HCT116 (cell line): ENCODE measurements at regions of chrX and their contacts with region 1.

Region 1: GRCh38 chrX:134782796-134783195 is 124.5 kb upstream of the PLAC1 start:
- DNase-seq: no peak
- ATAC-seq: no peak
- H3K4me3 ChIP-seq: no peak overlapping the region
- H3K27ac ChIP-seq: no peak overlapping the region
- H3K4me1 ChIP-seq: no peaks in the 10 kb centered on the region
- H3K27me3 ChIP-seq: no peaks in the 10 kb centered on the region
- CTCF ChIP-seq: peak; percentile 30 to 49 (median 34); a peak in 4 of 6 replicates
- POLR2A ChIP-seq: no peak
- RAD21 ChIP-seq: peak; percentile 42

Region 2: DNA sequence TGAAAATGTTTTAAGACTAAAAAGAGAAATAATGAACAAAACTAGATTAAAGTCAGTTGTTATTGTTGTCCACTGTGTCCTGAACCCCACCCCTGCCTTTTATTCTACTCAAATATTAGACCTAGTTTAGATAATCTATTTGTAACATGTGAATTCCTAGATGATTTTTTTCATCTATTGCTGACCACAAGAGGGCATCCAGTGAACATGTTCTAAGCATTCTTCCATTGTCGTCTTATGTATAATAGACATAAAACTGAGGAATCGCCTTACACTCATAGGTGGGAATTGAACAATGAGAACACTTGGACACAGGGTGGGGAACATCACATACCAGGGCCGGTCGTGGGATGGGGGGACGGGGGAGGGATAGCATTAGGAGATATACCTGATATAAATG is 359.2 kb before region 1 on chrX:
- CTCF ChIA-PET with region 1: interaction called, 3 read pairs
- POLR2A ChIA-PET with region 1: no interaction called
- RAD21 ChIA-PET with region 1: no interaction called
- intact Hi-C with region 1: loop called (anchors 2 kb)
- DNase-seq: no peak
- ATAC-seq: peak; percentile 46
- H3K4me3 ChIP-seq: no peak overlapping the region
- H3K27ac ChIP-seq: no peak overlapping the region
- H3K4me1 ChIP-seq: no peaks in the 10 kb centered on the region
- H3K27me3 ChIP-seq: no peaks in the 10 kb centered on the region
- CTCF ChIP-seq: peak; percentile 15 to 44 (median 18); a peak in 4 of 6 replicates
- POLR2A ChIP-seq: no peak
- RAD21 ChIP-seq: peak; percentile 56; the same call in 1 of the 2 replicates

Region 3: GRCh38 chrX:134484039-134484438 is 298.8 kb before region 1 on chrX:
- CTCF ChIA-PET with region 1: interaction called, 16 read pairs
- POLR2A ChIA-PET with region 1: no interaction called
- RAD21 ChIA-PET with region 1: no interaction called
- intact Hi-C with region 1: loop called (anchors 5 kb)
- DNase-seq: peak; percentile 36
- ATAC-seq: peak; percentile 25; the same call in 1 of the 2 replicates
- H3K4me3 ChIP-seq: no peak overlapping the region
- H3K27ac ChIP-seq: no peak overlapping the region
- H3K4me1 ChIP-seq: no peaks in the 10 kb centered on the region
- H3K27me3 ChIP-seq: no peaks in the 10 kb centered on the region
- CTCF ChIP-seq: peak; percentile 26 to 57 (median 43); a peak in 4 of 6 replicates
- POLR2A ChIP-seq: no peak
- RAD21 ChIP-seq: peak; percentile 57

Region 4: GRCh38 chrX:134520860-134521390 is 261.9 kb before region 1 on chrX:
- CTCF ChIA-PET with region 1: interaction called, 14 read pairs
- POLR2A ChIA-PET with region 1: no interaction called
- RAD21 ChIA-PET with region 1: no interaction called
- intact Hi-C with region 1: loop called (anchors 5 kb)
- DNase-seq: peak; percentile 51
- ATAC-seq: peak; percentile 83
- H3K4me3 ChIP-seq: no peak overlapping the region
- H3K27ac ChIP-seq: no peak overlapping the region
- H3K4me1 ChIP-seq: peaks cover 6 to 12% of the 10 kb centered on the region in 2 experiments; a peak in 3 of 4 replicates
- H3K27me3 ChIP-seq: no peaks in the 10 kb centered on the region
- CTCF ChIP-seq: peak; percentile 53 to 61 (median 60); a peak in 5 of 6 replicates
- POLR2A ChIP-seq: no peak
- RAD21 ChIP-seq: peak; percentile 83

Region 5: DNA sequence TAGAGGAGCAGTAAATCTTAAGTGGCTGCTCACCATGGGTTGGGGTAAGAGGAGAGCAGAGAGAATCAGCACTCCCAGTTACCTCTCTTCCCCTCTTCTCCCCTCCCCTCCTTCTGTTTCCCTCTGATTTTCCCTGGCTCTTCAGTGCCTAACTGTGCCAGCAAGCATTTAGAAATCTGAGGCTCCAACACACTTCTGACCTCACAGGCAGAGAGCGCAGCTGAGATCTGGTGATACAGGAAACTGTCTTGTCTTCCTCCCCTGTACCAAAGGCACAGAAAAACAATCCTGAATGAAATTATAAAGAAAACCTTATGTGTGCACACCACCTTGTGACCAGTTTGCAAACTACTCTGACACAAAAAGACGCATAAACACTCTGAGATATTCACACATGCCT is 125.6 kb after region 1 on chrX:
- CTCF ChIA-PET with region 1: no interaction called
- POLR2A ChIA-PET with region 1: no interaction called
- RAD21 ChIA-PET with region 1: no interaction called
- intact Hi-C with region 1: loop called (anchors 5 kb)
- DNase-seq: no peak
- ATAC-seq: peak; percentile 60
- H3K4me3 ChIP-seq: no peak overlapping the region
- H3K27ac ChIP-seq: peak overlapping the region; percentile 27
- H3K4me1 ChIP-seq: peaks cover 39 to 84% of the 10 kb centered on the region in 2 experiments
- H3K27me3 ChIP-seq: no peaks in the 10 kb centered on the region
- CTCF ChIP-seq: peak in 2 of 3 experiments; percentile 9 to 41; a peak in 2 of 6 replicates
- POLR2A ChIP-seq: no peak
- RAD21 ChIP-seq: no peak

Region 6: GRCh38 chrX:134999469-134999868 is 216.7 kb after region 1 on chrX:
- CTCF ChIA-PET with region 1: interaction called, 6 read pairs
- POLR2A ChIA-PET with region 1: no interaction called
- RAD21 ChIA-PET with region 1: no interaction called
- intact Hi-C with region 1: loop called (anchors 5 kb)
- DNase-seq: peak; percentile 51
- ATAC-seq: peak; percentile 49
- H3K4me3 ChIP-seq: no peak overlapping the region
- H3K27ac ChIP-seq: 0 out of 2 replicates have a peak overlapping the region, but pooled peaks have one; percentile 30
- H3K4me1 ChIP-seq: peaks cover 21 to 63% of the 10 kb centered on the region in 2 experiments
- H3K27me3 ChIP-seq: no peaks in the 10 kb centered on the region
- CTCF ChIP-seq: peak; percentile 30 to 56 (median 53); a peak in 4 of 6 replicates
- POLR2A ChIP-seq: no peak
- RAD21 ChIP-seq: peak; percentile 85